H1 (cell line): ENCODE measurements at regions of chr1 and their contacts with region 1.

Region 1: DNA sequence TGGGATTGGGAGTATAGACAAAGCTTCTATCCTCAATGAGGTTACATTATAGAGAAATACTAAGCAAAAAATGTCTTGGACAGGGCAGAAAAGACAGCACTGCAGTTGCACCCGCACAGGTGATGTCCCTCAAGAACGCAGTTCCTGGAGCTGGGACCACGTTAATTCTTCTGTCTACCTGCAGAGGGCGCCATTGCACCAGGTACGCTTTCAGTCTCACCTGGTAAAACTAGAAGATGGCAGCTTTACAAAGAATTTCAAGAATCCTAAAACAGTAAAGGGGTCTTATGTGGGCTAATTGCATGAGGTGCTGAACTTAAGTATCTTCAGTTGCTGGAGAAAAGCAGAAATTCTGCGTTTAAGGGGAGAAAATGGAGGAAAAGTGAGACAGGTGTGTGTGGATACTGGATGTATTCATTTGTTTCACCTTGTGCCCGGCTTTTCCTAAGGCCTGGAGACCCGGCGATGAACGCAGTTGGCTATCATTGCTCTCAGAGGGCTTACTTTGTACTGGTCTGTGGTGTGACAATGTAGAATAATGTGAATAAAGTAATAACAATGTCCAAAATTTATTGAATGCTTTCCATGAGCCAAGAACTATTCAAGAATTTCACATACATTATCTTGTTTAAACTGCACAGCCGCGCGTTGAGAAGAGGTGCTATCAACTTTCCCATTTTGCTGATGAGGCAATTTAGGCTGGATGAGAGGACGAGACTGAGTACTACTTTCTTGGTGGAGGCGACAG is 276.3 kb upstream of the GREM2 start:
- DNase-seq: peak; percentile 46 to 87
- H3K4me3 ChIP-seq: no peak overlapping the region
- H3K27ac ChIP-seq: no peak overlapping the region
- H3K4me1 ChIP-seq: peaks cover 0 to 6% (median 0%) of the 10 kb centered on the region in 4 experiments; a peak in 1 of 7 replicates
- H3K27me3 ChIP-seq: no peaks in the 10 kb centered on the region
- CTCF ChIP-seq: peak; percentile 80 to 89 (median 86)
- EP300 ChIP-seq: no peak
- POLR2A ChIP-seq: no peak
- RAD21 ChIP-seq: peak; percentile 99 to 100

Region 2: DNA sequence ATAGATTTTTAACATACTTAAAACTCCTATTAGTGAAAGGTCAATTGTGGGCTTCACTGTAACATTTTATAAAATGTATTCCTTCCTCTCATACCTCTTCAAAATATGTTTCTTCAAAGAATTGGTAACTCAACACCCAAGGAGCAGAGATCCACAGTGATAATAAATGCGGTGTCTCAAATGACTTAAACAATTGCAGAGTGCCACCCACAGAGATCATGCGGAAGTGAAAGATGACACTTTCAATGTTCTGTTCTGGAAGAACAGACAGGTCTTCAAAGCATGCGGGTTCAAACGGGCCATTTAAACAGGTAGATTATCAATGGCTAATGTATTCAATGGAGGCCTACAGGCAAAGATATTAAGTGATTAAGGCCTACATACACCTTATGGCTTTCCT is 119.2 kb before region 1 on chr1:
- CTCF ChIA-PET with region 1: no interaction called
- POLR2A ChIA-PET with region 1: no interaction called
- DNase-seq: no peak
- H3K4me3 ChIP-seq: no peak overlapping the region
- H3K27ac ChIP-seq: no peak overlapping the region
- H3K4me1 ChIP-seq: no peaks in the 10 kb centered on the region
- H3K27me3 ChIP-seq: no peaks in the 10 kb centered on the region
- CTCF ChIP-seq: no peak
- EP300 ChIP-seq: no peak
- POLR2A ChIP-seq: no peak
- RAD21 ChIP-seq: no peak

Region 3: GRCh38 chr1:240854367-240854766 is 33.8 kb before region 1 on chr1:
- CTCF ChIA-PET with region 1: no interaction called
- POLR2A ChIA-PET with region 1: no interaction called
- DNase-seq: no peak
- H3K4me3 ChIP-seq: no peak overlapping the region
- H3K27ac ChIP-seq: no peak overlapping the region
- H3K4me1 ChIP-seq: no peaks in the 10 kb centered on the region
- H3K27me3 ChIP-seq: no peaks in the 10 kb centered on the region
- CTCF ChIP-seq: no peak
- EP300 ChIP-seq: no peak
- POLR2A ChIP-seq: no peak
- RAD21 ChIP-seq: no peak

Region 4: DNA sequence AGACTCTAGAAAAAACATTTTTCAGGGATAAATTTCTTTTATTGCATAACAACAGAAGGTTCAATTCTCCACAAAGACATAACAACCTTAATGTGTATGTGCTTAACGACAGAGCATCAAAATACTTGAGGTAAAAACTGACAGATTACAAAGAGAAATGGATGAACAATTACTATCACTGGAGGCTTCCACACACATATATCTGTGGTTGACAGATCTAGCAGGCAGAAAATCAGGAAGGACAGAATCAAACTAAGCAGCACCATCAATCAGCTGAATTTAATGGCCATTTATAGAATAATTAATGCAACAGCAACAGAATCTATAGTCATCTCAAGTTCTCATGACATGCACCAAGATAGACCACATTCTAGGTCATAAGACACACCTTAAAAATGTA is 29.8 kb after region 1 on chr1:
- CTCF ChIA-PET with region 1: no interaction called
- POLR2A ChIA-PET with region 1: no interaction called
- DNase-seq: no peak
- H3K4me3 ChIP-seq: no peak overlapping the region
- H3K27ac ChIP-seq: no peak overlapping the region
- H3K4me1 ChIP-seq: no peaks in the 10 kb centered on the region
- H3K27me3 ChIP-seq: peaks cover 0 to 1% (median 0%) of the 10 kb centered on the region in 4 experiments; a peak in 1 of 7 replicates
- CTCF ChIP-seq: no peak
- EP300 ChIP-seq: no peak
- POLR2A ChIP-seq: no peak
- RAD21 ChIP-seq: no peak

Region 5: GRCh38 chr1:240946926-240947325 is 58.7 kb after region 1 on chr1:
- CTCF ChIA-PET with region 1: interaction called, 11 read pairs
- POLR2A ChIA-PET with region 1: no interaction called
- DNase-seq: no peak
- H3K4me3 ChIP-seq: no peak overlapping the region
- H3K27ac ChIP-seq: no peak overlapping the region
- H3K4me1 ChIP-seq: no peaks in the 10 kb centered on the region
- H3K27me3 ChIP-seq: peaks cover 0 to 1% (median 0%) of the 10 kb centered on the region in 4 experiments; a peak in 1 of 7 replicates
- CTCF ChIP-seq: peak; percentile 24 to 37 (median 26); a peak in 3 of 4 replicates
- EP300 ChIP-seq: no peak
- POLR2A ChIP-seq: no peak
- RAD21 ChIP-seq: peak; percentile 47 to 59; a peak in 3 of 4 replicates

Region 6: DNA sequence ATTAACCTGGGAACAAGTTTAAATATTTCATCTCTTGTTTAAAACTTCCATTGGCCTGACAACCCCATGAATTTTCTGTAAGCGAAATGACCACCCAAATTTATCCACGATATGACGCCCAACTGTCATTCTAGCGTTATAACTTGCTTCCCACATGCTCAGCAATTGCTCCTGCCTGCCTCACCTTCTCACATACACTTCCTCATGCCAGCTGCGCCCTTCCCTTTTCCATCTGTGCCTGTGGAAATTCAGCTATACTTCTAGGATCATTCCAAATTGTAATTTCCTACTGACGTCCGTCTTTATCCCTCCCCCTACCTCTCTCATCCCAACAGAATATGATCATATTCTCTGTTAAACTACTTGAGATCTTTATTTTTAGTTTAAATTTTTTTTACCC is 220.8 kb after region 1 on chr1:
- CTCF ChIA-PET with region 1: no interaction called
- POLR2A ChIA-PET with region 1: no interaction called
- DNase-seq: no peak
- H3K4me3 ChIP-seq: no peak overlapping the region
- H3K27ac ChIP-seq: no peak overlapping the region
- H3K4me1 ChIP-seq: peaks cover 0 to 2% (median 0%) of the 10 kb centered on the region in 4 experiments; a peak in 1 of 7 replicates
- H3K27me3 ChIP-seq: no peaks in the 10 kb centered on the region
- CTCF ChIP-seq: no peak
- EP300 ChIP-seq: no peak
- POLR2A ChIP-seq: no peak
- RAD21 ChIP-seq: no peak